ENCODE measurements at regions of chr1 and their contacts with region 1.

Region 1: DNA sequence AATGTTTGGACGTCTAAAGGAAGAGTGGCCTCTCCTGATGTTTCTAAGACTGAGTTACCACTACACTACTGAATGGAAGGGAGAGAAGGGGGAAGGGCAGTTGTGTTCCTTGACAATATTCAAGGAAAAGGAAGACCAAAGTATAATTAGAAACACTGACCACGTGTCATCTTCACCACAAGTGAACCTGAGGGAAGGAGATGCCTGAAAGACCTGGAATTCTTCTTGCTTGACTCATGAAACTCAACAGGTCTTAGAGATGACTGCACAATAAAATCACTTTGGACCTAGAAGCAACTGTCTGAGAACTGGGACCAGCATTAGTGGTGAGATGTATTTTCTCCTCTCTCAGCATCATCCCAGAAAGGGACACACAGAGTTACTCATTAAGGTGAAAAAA is 56.7 kb downstream of the PTPN14 start:
- DNase-seq: no peak
- ATAC-seq: no peak
- H3K4me3 ChIP-seq: no peak overlapping the region
- H3K27ac ChIP-seq: no peak overlapping the region
- H3K4me1 ChIP-seq: no peaks in the 10 kb centered on the region
- H3K27me3 ChIP-seq: no peaks in the 10 kb centered on the region; a peak in 1 of 4 replicates
- CTCF ChIP-seq: no peak
- EP300 ChIP-seq: no peak
- POLR2A ChIP-seq: no peak
- RAD21 ChIP-seq: no peak

Region 2: DNA sequence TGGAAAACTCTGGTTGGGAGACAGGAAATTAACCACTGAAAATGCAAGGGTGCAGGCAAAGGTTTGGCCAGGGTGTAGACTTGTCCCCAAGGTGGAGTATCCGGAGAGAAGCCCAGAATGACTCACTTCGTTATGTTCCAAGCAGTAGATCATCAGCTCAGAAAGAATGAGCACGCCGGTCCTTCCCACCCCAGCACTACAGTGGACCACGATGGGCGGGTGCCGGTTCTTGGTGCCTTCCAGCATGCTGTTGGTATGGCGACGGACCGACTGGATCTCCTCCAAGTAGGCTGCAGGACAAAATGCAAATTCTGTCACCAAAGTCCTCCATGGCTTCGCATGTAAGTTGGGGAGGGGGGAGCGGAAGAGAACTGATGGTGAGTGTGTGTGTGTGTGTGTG is 130.3 kb before region 1 on chr1:
- CTCF ChIA-PET with region 1: no interaction called
- POLR2A ChIA-PET with region 1: no interaction called
- RAD21 ChIA-PET with region 1: no interaction called
- SMC1A ChIA-PET with region 1: no interaction called
- in situ Hi-C with region 1: no loop called
- intact Hi-C with region 1: no loop called
- DNase-seq: no peak
- ATAC-seq: no peak
- H3K4me3 ChIP-seq: no peak overlapping the region
- H3K27ac ChIP-seq: no peak overlapping the region
- H3K4me1 ChIP-seq: no peaks in the 10 kb centered on the region
- H3K27me3 ChIP-seq: no peaks in the 10 kb centered on the region; a peak in 1 of 4 replicates
- CTCF ChIP-seq: no peak
- EP300 ChIP-seq: no peak
- POLR2A ChIP-seq: no peak
- RAD21 ChIP-seq: no peak

Region 3: DNA sequence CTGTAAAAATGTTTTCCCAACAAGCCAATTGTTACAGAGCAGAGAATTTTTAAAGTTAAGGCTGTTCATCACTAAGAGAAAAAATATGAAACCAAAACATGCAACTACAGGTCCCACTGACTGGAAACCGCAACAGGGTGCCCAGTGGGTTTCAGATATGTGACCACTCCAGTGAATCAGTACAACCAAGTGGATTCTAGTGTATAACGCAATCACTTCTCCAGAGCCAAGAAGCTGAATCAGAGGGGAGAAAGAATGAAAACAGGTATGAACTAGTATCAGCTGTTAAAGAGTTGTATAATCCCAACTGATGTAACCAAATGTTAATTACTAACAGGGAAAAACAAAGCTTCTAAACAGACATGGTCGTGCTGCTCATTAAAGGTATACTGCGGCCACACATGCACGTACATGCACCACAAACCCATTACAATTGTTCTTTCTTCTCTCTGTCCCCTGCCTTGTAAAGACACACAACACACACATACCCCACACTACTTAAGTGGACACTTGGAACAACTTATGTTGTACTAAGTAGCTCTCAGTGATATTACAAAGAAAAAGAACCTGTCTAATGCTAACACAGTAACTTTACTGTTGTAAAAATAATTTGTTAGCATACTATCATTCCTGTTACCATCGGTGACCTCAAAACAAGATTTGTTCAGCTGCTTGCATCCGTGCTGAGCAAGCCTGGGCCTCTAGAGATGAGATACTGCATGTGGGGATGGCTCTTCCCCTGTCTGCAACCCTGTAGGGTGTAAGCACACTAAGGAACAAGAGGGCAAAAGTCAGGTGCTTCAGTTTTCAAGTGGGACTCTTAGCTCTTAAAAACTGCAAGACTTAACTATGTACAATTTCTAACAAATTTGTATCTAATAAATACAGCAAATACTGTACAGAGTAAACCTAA is 17.5 kb before region 1 on chr1:
- CTCF ChIA-PET with region 1: interaction called, 8 read pairs
- POLR2A ChIA-PET with region 1: interaction called, 3 read pairs
- RAD21 ChIA-PET with region 1: interaction called, 5 read pairs
- SMC1A ChIA-PET with region 1: interaction called, 14 read pairs
- in situ Hi-C with region 1: no loop called
- intact Hi-C with region 1: no loop called
- DNase-seq: no peak
- ATAC-seq: peak; percentile 74
- H3K4me3 ChIP-seq: no peak overlapping the region
- H3K27ac ChIP-seq: no peak overlapping the region
- H3K4me1 ChIP-seq: no peaks in the 10 kb centered on the region
- H3K27me3 ChIP-seq: no peaks in the 10 kb centered on the region
- CTCF ChIP-seq: no peak
- EP300 ChIP-seq: no peak
- POLR2A ChIP-seq: no peak
- RAD21 ChIP-seq: no peak

Region 4: GRCh38 chr1:214505134-214505533 is 10.4 kb after region 1 on chr1:
- CTCF ChIA-PET with region 1: no interaction called
- POLR2A ChIA-PET with region 1: no interaction called
- RAD21 ChIA-PET with region 1: interaction called, 6 read pairs
- SMC1A ChIA-PET with region 1: interaction called, 11 read pairs
- in situ Hi-C with region 1: no loop called
- intact Hi-C with region 1: no loop called
- DNase-seq: no peak
- ATAC-seq: no peak
- H3K4me3 ChIP-seq: no peak overlapping the region
- H3K27ac ChIP-seq: no peak overlapping the region
- H3K4me1 ChIP-seq: no peaks in the 10 kb centered on the region
- H3K27me3 ChIP-seq: no peaks in the 10 kb centered on the region
- CTCF ChIP-seq: no peak
- EP300 ChIP-seq: no peak
- POLR2A ChIP-seq: no peak
- RAD21 ChIP-seq: no peak

Region 5: DNA sequence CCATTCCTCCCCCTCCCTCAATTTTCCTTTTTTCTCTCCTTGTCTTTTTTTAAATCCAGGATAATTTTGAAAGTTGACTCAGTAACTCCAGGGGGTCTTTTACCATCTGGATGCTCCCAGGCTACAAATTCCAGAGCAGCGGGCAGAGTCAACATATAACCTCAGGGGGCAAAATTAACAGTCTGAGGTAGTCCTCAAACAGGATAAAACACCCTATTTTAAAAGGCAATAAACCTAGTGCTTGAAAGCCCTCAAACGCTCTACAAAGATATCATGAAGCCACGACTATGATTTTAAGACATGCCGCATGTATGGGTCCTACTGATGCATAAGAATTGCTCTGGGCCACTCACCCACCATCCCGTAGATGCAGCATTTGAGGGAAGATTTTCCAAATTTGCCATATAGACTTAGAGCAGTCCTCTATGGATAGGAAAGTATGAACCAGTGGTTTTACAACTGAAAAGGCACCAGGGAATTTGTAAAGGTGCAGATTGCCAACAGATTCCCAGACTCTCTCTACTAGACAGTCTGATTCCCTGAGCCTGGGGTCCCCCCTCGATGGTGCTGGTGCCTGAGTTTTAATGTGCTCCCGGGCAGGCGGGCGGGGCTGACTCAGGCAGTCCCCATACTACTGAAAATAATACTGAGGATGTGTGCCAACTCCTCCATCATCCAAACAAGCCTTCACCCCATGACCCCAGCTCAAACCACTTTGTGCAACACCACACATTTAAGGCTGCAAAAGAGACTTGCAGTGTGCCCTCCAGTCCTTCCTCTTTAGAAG is 19.5 kb after region 1 on chr1:
- CTCF ChIA-PET with region 1: no interaction called
- POLR2A ChIA-PET with region 1: no interaction called
- RAD21 ChIA-PET with region 1: interaction called, 5 read pairs
- SMC1A ChIA-PET with region 1: interaction called, 10 read pairs
- in situ Hi-C with region 1: no loop called
- intact Hi-C with region 1: no loop called
- DNase-seq: no peak
- ATAC-seq: peak; percentile 25; the same call in 2 of the 3 replicates
- H3K4me3 ChIP-seq: no peak overlapping the region
- H3K27ac ChIP-seq: no peak overlapping the region
- H3K4me1 ChIP-seq: no peaks in the 10 kb centered on the region
- H3K27me3 ChIP-seq: no peaks in the 10 kb centered on the region; a peak in 1 of 4 replicates
- CTCF ChIP-seq: no peak
- EP300 ChIP-seq: no peak
- POLR2A ChIP-seq: no peak
- RAD21 ChIP-seq: no peak

Region 6: DNA sequence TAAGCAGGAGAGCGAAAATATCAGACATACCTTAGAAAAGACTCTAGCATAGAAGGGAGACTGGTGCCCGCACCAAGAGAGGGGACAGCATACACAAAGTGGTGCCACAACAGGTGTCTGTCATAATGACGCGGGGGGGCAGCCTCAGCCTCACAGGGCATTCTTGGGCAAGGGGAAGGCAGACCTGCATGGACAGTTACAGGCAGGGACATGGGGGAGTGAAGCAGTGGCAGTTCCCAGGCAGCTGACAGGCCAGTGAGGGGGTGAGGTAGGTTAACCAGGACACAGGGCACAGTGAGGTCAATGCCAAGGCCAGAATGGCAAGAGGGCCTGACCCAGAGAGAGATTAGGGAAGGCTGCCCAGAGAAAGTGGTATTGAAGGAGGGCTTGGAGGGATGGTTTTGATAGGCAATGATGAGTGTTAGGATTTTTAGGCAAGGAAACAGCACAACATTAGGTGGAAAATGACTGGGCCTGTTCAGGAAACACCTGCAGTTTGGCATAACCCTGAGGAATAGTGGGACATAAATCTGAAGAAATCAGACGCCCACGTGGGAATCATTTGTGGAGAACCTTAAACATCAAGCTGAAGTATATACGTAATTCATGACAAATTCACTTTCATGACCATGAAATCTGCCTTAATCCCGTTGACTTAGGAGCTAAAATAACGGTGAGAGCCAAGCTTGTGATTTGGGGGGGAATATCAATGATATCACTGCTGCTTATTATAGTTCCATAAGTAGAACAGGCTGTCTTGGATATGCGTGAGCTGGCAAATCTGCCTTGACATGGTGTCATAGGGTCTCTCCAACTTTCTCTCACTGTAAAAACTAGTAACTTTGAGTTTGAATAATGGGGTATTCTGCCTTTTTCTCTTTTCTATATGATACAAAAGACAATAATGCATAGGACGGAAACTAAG is 47.8 kb after region 1 on chr1:
- CTCF ChIA-PET with region 1: no interaction called
- POLR2A ChIA-PET with region 1: no interaction called
- RAD21 ChIA-PET with region 1: no interaction called
- SMC1A ChIA-PET with region 1: interaction called, 10 read pairs
- in situ Hi-C with region 1: no loop called
- intact Hi-C with region 1: no loop called
- DNase-seq: no peak
- ATAC-seq: no peak; the same call in 1 of the 3 replicates
- H3K4me3 ChIP-seq: no peak overlapping the region
- H3K27ac ChIP-seq: no peak overlapping the region
- H3K4me1 ChIP-seq: no peaks in the 10 kb centered on the region
- H3K27me3 ChIP-seq: no peaks in the 10 kb centered on the region; a peak in 1 of 4 replicates
- CTCF ChIP-seq: no peak
- EP300 ChIP-seq: no peak
- POLR2A ChIP-seq: no peak
- RAD21 ChIP-seq: no peak

Measured in GM12878 (cell line).